Colonic mucosa (tissue), 4 donors: ENCODE measurements at regions of chr16 and their contacts with region 1.

Region 1: DNA sequence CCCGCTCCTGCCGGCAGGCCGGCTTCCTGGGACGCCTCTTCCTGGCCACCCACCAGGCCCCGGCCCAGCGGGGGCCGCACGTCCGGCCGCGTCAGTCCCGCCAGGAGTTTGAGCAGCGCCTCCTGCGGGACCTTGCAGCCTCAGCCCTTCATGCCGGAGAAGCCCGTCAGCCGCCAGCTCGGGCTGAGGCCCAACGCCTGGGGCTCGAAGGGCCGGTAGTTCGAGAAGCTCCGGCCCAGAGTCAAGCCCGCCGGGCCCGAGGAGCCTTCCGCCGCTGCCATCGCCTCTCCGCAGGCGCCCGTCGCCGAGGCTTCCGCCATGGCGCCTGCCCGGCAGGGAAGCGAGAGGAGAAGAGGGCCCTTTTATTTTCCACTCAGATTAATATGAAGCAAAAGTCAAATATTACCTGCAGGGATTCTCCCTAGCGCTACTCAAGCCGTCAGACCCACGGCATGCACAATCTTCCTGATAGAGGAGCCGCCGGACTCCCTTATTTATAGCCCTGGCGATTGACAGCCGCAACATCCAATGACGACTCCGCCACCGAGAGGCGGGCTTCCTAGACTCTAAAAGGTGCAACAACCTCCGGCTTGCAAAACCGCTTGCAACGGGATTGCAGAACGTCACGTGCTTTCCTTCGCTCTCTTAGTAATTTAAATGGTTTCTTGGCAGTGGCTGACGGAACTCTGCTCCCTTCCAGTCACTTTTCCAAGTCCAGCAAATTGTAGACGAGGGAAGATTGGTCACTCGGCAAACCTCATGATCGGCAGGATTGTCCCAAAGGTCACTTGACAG is at the start of gene SEPHS2:
- DNase-seq: peak; percentile 100
- H3K4me3 ChIP-seq: peak within 1 kb of the TSS; percentile 68
- H3K27ac ChIP-seq: peak within 1 kb of the TSS; percentile 92
- H3K4me1 ChIP-seq: peaks cover 13% of the 10 kb centered on the region
- H3K27me3 ChIP-seq: no peaks in the 10 kb centered on the region
- CTCF ChIP-seq: peak; percentile 33
- total RNA-seq, gene SEPHS2: 93.3 to 156 TPM

Region 2: GRCh38 chr16:30526823-30527635 is 81.4 kb after region 1 on chr16:
- intact Hi-C with region 1: loop called (anchors 5 kb)
- DNase-seq: peak; percentile 99
- H3K4me3 ChIP-seq: peak overlapping the region; percentile 68
- H3K27ac ChIP-seq: peak overlapping the region; percentile 98
- H3K4me1 ChIP-seq: no peaks in the 10 kb centered on the region
- H3K27me3 ChIP-seq: no peaks in the 10 kb centered on the region
- CTCF ChIP-seq: peak; percentile 42